CD4-positive, alpha-beta memory T cell (primary cell): ENCODE measurements at regions of chr16 and their contacts with region 1.

Region 1: DNA sequence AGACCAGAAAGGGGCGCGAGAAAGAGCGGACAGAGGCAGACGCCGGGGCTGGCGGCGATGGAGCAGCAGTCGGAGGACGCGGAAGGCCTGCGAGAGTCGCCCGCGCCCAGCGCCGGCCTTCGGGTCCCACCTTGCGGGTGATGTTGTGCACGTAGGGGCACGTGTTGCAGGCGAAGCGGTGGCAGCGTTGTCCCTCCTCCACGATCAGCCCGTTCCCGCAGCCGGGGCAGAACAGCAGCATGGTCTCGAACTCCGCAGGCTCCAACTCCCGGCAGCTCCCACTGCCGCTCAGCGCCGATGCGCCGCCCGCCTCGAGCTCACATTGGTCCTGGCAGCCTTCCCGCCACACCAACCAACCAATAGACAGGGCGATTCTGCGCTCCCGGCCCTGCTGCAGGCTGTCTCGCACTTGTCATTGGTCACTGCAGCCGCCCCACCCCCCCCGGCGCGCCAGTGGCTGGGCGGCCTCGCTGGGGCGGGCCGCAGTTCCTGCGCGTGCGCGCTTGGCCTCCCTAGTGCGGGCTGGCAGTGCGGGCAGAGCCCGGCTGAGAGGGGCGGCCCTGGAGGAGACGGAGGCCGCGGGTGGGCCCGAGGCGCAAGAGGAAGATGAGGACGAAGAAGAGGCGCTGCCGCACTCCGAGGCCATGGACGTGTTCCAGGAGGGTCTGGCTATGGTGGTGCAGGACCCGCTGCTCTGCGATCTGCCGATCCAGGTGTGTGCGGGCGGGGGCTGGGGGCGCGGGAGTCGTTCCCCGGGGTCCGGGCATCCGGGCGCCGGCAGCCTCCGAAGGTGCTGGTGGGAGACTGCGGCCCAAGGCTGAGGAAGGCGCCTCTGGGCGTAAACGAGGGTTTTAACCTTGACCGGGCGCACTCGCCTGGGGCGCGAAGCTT is at the starts of genes POLR3K and SNRNP25:
- DNase-seq: peak; percentile 96 to 98 (median 97)
- H3K4me3 ChIP-seq: peak within 1 kb of the TSS; percentile 79 to 84
- H3K4me3 Mint-ChIP-seq: peak within 1 kb of the TSS; percentile 90 to 99 (median 97)
- H3K27ac ChIP-seq: peak within 1 kb of the TSS; percentile 60
- H3K27ac Mint-ChIP-seq: peak within 1 kb of the TSS; percentile 84 to 96 (median 94)
- H3K4me1 ChIP-seq: peaks cover 29% of the 10 kb centered on the region
- H3K4me1 Mint-ChIP-seq: peaks cover 16 to 40% (median 24%) of the 10 kb centered on the region in 4 donors
- H3K27me3 ChIP-seq: no peaks in the 10 kb centered on the region
- H3K27me3 Mint-ChIP-seq: no peaks in the 10 kb centered on the region
- total RNA-seq, gene POLR3K: 19.9 to 21.7 TPM
- total RNA-seq, gene SNRNP25: 10.0 to 10.2 TPM

Region 2: GRCh38 chr16:38939-39892 is 14.4 kb before region 1 on chr16:
- CTCF ChIA-PET with region 1: interaction called, 7 read pairs
- POLR2A ChIA-PET with region 1: interaction called, 22 read pairs
- intact Hi-C with region 1: no loop called
- DNase-seq: peak; percentile 49 to 79 (median 52)
- H3K4me3 ChIP-seq: no peak overlapping the region
- H3K4me3 Mint-ChIP-seq: peak overlapping the region in 7 of 8 donors; percentile 32 to 67 (median 51)
- H3K27ac ChIP-seq: peak overlapping the region; percentile 23
- H3K27ac Mint-ChIP-seq: peak overlapping the region; percentile 31 to 90 (median 80)
- H3K4me1 ChIP-seq: peaks cover 30% of the 10 kb centered on the region
- H3K4me1 Mint-ChIP-seq: peaks cover 34 to 50% (median 43%) of the 10 kb centered on the region in 4 donors
- H3K27me3 ChIP-seq: no peaks in the 10 kb centered on the region
- H3K27me3 Mint-ChIP-seq: no peaks in the 10 kb centered on the region

Region 3: DNA sequence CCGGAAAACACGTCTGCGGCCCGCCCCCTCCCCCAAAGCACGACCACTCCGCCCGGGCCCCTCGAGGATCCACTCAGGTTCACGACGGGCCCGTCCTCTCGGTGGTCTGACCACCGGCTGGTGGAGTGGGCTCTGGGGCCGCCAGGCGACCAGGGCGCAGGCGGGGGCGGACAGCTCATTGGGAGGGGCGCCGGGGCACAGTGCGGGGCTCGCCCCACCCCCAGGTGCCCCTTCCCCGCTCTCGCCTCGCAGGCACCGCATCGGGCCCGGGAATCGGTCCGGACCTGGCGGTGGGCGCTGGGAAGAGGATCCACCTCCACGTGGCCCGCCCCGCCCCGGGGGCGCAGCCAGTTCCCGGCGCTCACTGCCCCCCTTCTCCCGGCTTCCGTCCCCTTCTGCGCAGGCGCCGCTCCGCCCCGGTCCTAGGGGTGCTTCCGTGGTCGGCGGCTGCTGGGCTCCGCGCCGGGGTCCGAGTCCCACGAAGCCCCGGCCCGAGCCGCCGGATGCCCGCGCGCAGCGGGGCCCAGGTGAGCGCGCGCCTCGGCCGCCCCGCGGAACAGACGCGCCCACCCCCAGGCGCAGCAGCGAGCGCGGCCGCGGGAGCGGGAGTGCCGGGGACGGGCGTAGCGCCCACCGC is 24.3 kb after region 1 on chr16 and contains the start of gene MPG:
- CTCF ChIA-PET with region 1: no interaction called
- POLR2A ChIA-PET with region 1: interaction called, 13 read pairs
- intact Hi-C with region 1: loop called (anchors 1 kb)
- DNase-seq: peak; percentile 78 to 84 (median 79)
- H3K4me3 ChIP-seq: peak within 1 kb of the TSS; percentile 49 to 52
- H3K4me3 Mint-ChIP-seq: peak within 1 kb of the TSS; percentile 86 to 91 (median 90)
- H3K27ac ChIP-seq: peak within 1 kb of the TSS; percentile 65
- H3K27ac Mint-ChIP-seq: peak within 1 kb of the TSS; percentile 68 to 91 (median 78)
- H3K4me1 ChIP-seq: peaks cover 26% of the 10 kb centered on the region
- H3K4me1 Mint-ChIP-seq: peaks cover 11 to 41% (median 30%) of the 10 kb centered on the region in 4 donors
- H3K27me3 ChIP-seq: peaks cover 6% of the 10 kb centered on the region
- H3K27me3 Mint-ChIP-seq: peaks cover 4% of the 10 kb centered on the region in 2 donors
- total RNA-seq, gene MPG: 30.7 TPM

Region 4: DNA sequence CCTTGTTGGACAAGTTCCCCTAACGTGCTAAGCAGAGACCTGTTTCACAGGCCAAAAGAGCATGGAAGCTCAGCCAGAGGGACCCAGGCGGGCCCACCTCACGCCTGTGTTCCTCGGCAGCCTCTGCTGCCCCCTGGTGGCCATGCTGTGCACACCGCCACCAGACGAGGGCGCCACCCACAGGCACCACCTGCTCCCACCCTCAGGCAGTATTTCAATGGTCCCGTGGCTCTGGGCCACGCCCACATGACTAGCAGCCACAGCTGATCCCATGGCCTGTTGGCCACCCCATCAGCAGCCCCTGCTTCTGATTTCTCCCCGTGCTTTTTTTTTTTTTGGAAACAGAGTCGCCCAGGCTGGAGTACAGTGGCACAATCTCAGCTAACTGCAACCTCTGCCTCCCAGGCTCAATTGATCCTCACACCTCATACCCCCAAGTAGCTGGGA is 43.4 kb after region 1 on chr16:
- CTCF ChIA-PET with region 1: interaction called, 8 read pairs
- POLR2A ChIA-PET with region 1: interaction called, 3 read pairs
- intact Hi-C with region 1: loop called (anchors 1 kb)
- DNase-seq: peak; percentile 87 to 89 (median 87)
- H3K4me3 ChIP-seq: no peak overlapping the region
- H3K4me3 Mint-ChIP-seq: no peak overlapping the region
- H3K27ac ChIP-seq: no peak overlapping the region
- H3K27ac Mint-ChIP-seq: peak overlapping the region in 4 of 7 donors; percentile 4 to 67 (median 60)
- H3K4me1 ChIP-seq: no peaks in the 10 kb centered on the region
- H3K4me1 Mint-ChIP-seq: peaks cover 3 to 6% (median 4%) of the 10 kb centered on the region in 4 donors
- H3K27me3 ChIP-seq: no peaks in the 10 kb centered on the region
- H3K27me3 Mint-ChIP-seq: no peaks in the 10 kb centered on the region